OCI-LY7 (cell line): ENCODE measurements at regions of chr13 and their contacts with region 1.

Region 1: DNA sequence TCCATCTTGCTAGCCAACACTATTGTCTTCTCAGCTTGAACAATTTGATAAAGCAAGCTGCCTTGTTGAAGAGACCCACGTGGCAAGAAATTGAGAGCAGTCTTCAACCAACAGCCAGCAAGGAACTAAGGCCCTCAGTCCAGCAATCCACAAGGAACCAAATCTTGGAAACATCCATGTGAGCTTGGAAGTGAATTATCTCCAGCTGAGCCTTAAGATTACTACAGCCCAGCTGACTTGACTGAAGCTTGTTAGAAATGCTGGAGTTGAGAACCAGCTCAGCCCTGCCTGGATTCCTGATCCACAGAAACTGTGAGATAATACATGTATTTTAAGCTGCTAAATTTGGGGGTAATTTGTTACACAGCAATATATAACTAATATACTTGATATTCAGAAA is 26.2 kb upstream of the DCT start:
- DNase-seq: no peak
- H3K4me3 ChIP-seq: no peak overlapping the region
- H3K27ac ChIP-seq: no peak overlapping the region
- H3K4me1 ChIP-seq: peaks cover 22% of the 10 kb centered on the region
- CTCF ChIP-seq: no peak

Region 2: DNA sequence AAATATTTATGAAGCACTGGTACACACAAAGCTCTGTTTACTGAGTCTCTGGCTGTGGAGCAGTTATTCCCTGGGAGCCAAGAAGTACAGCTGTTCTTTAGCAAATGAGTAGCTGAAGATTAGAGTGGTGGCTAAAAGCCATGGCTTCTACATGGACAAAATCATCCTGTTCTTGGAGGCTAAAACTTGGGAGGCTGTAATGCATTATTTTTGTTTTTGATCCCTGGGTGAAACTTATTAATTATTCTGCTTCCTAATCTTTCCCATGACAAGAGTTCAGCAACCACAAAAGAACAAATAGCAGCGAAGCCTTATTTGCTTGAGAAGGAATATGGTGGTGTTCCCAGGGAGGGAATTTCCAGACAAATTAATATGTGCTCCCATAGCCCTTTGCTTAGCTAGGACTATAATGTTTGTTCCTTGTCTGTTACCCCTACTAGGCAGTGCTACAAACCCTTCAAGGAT is 135.7 kb before region 1 on chr13:
- CTCF ChIA-PET with region 1: no interaction called
- POLR2A ChIA-PET with region 1: no interaction called
- intact Hi-C with region 1: no loop called
- DNase-seq: no peak
- H3K4me3 ChIP-seq: no peak overlapping the region
- H3K27ac ChIP-seq: no peak overlapping the region
- H3K4me1 ChIP-seq: no peaks in the 10 kb centered on the region
- CTCF ChIP-seq: no peak

Region 3: DNA sequence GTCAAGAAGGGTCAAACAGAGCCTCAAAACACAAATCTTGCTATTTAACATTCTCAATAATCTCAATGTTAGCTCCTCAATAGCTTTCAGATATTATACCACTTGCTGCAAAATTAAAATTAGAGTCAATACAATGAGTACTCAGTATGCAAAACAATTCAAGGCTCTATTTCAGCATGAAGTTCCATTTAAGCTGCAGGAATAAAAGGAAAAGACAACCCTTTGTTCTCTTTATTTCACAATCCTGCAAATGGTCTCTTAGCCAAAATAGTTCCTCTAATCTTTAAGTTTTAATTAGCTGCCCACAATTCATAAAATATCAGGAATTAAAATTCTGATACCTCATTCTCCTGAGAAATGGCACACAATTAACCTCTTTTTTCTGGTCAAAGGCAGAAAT is 14.3 kb after region 1 on chr13:
- CTCF ChIA-PET with region 1: no interaction called
- POLR2A ChIA-PET with region 1: no interaction called
- intact Hi-C with region 1: no loop called
- DNase-seq: no peak
- H3K4me3 ChIP-seq: no peak overlapping the region
- H3K27ac ChIP-seq: no peak overlapping the region
- H3K4me1 ChIP-seq: no peaks in the 10 kb centered on the region
- CTCF ChIP-seq: no peak

Region 4: DNA sequence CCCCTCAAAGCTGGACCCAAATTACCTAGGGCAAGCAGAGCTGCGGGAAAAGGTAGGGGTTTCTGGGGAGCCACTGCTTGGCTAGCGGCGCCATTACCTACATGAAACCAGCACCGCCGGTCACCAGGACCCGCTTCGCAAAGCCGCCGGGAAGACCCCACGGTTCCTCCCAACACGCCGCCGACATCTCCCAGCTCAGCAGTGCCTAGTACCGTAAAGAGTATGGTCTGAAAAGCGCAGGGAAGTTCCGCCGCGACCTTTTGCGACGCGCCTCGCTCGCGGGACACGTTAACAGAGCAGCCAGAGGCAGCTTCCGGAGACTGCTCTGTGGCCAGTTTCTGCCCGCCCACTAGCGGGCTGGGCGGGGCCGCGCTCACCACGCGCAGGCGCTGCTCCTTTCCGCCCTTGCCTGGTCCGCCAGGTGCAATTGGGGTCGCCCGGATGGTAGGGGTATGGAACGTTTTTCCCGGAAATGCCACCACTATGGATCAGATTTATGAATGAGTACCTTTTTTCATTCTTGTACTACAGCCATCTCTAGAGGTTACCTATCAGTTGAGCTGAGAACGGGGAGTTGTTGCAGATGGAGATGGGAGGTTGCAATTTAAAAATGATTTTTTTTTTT is 90.3 kb after region 1 on chr13 and contains the start of gene TGDS:
- CTCF ChIA-PET with region 1: no interaction called
- POLR2A ChIA-PET with region 1: no interaction called
- intact Hi-C with region 1: loop called (anchors 10 kb)
- DNase-seq: peak; percentile 89
- H3K4me3 ChIP-seq: peak within 1 kb of the TSS; percentile 99
- H3K27ac ChIP-seq: peak within 1 kb of the TSS; percentile 61
- H3K4me1 ChIP-seq: peaks cover 8% of the 10 kb centered on the region
- CTCF ChIP-seq: no peak
- total RNA-seq, gene TGDS: 8.0 and 8.8 TPM in 2 replicates